ENCODE measurements at regions of chr22 and their contacts with region 1.

Region 1: DNA sequence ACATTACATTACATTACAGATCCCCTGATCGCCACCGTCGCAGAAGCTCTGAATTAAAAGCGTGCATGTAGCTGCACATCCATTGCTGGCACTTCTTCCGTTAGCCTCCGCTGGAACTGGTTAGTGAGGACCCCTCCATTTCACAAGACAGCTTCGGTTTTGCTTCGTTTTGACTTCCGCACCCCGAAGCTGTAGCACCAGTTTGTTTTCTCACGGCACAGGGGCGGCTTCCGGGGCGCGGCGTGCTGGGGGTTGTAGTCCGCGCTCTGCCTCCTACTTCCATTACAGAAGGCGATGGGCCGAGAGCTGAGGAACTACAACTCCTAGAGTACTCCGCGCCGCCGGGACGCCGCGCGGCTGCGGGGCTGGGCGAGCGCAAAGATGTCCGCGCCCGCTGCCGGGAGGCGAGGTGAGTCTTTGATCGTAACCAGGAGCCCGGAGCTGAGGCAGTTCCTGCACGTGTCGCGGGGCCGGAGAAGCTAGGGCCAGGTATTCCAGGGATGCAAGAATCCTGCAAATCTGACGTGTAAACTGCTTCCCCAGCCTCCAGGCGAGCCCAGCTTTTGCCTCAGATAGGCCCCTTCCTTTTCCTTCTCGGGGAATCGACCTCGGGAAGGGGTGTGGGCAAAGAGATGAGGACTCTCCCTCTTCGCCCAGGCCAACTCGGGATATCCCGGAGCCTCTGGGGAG is at the start of gene PEX26:
- H3K4me3 ChIP-seq: peak within 1 kb of the TSS; percentile 96
- H3K27ac ChIP-seq: peak within 1 kb of the TSS; percentile 67
- H3K4me1 ChIP-seq: no peaks in the 10 kb centered on the region
- CTCF ChIP-seq: no peak

Region 2: DNA sequence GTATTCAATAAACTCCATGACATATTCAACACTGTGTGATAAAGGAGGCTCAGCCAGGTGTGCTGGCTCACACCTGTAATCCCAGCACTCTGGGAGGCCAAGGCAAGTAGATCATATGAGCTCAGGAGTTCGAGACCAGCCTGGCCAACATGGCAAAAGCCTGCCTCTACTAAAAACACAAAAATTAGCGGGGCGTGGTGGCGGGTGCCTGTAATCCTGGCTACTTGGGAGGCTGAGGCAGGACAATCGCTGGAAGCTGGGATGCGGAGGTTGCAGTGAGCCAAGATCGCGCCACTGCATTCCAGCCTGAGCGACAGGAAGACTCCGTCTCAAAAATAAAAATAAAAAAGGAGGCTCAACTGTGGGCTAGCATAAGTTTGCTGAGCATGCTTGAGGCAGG is 518.6 kb before region 1 on chr22:
- CTCF ChIA-PET with region 1: interaction called, 10 read pairs
- POLR2A ChIA-PET with region 1: interaction called, 3 read pairs
- H3K4me3 ChIP-seq: no peak overlapping the region
- H3K27ac ChIP-seq: no peak overlapping the region
- H3K4me1 ChIP-seq: no peaks in the 10 kb centered on the region
- CTCF ChIP-seq: no peak

Region 3: DNA sequence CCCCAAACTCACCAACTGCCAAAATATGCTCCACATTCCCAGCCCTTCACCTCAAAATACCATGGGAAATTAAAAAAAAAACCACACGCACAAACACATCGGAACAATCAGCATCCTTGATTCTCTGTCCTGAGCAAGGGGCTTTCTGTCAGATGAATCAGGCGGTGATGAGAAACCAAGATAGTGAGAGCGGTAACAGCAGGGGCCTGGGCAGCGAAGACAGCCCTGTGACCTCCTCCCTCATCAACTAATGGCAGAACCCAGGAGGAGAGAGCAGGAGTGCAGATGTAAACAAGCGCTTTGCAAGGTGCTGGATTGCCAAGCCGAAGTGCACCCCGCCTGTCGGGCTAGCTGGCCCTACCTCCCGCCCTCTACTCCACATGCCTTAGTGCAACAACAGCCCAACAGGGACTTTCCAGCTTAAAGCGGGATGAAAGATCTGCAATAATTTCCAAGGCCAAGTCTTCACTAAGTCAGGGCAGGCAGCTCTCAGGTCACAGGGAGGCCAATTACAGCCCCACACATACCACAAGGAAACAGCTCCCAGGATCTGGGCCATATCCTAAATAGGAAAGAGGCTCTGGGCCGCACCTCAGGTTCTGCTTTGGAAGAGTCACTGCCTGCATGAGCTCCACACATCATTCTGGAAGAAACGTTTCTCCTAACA is 231.3 kb before region 1 on chr22:
- CTCF ChIA-PET with region 1: interaction called, 12 read pairs
- POLR2A ChIA-PET with region 1: no interaction called
- H3K4me3 ChIP-seq: no peak overlapping the region
- H3K27ac ChIP-seq: no peak overlapping the region
- H3K4me1 ChIP-seq: no peaks in the 10 kb centered on the region
- CTCF ChIP-seq: no peak

Region 4: DNA sequence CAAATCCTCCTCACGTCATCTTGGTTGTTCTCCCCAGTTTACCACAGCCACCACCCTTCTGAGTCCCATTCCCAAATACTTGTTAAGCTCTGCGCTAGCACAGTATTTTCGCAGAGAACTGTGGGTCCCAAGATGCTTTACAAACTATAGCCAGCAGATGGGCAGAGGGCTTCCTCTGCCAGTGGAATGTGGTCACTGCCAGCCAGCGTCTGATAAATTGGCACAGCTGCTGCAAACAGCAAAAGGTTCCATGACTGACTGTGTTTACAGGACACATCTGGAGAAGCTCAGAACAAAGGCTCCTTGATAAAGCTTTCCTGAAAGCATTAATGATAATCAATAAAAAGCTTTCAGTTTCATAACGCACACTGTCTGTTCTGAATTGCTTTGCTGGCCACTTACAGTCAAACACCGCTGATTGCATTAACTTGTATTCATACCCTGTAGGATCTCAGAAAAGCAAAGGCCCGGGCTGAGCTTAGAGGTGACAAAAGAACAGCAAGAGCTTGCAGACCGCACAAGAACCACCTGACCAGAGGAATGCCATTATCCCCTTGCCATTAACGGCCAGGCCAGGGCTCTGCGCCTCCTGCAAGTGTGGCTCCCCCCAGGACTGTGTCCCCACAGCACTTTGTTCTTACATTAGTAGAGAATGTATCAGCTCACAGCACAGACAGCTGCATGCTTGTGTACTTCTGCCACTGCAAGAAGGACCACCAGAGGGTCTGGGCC is 174.1 kb before region 1 on chr22:
- CTCF ChIA-PET with region 1: interaction called, 26 read pairs
- POLR2A ChIA-PET with region 1: no interaction called
- H3K4me3 ChIP-seq: no peak overlapping the region
- H3K27ac ChIP-seq: no peak overlapping the region
- H3K4me1 ChIP-seq: no peaks in the 10 kb centered on the region
- CTCF ChIP-seq: no peak

Region 5: GRCh38 chr22:18001040-18001893 is 76.5 kb before region 1 on chr22:
- CTCF ChIA-PET with region 1: interaction called, 20 read pairs
- POLR2A ChIA-PET with region 1: interaction called, 15 read pairs
- H3K4me3 ChIP-seq: peak overlapping the region; percentile 92
- H3K27ac ChIP-seq: peak overlapping the region; percentile 95
- H3K4me1 ChIP-seq: peaks cover 9% of the 10 kb centered on the region; the same call in 1 of the 2 replicates
- CTCF ChIP-seq: no peak; the same call in 1 of the 2 replicates

Region 6: GRCh38 chr22:18057568-18058209 is 20.1 kb before region 1 on chr22:
- CTCF ChIA-PET with region 1: interaction called, 95 read pairs
- POLR2A ChIA-PET with region 1: interaction called, 5 read pairs
- H3K4me3 ChIP-seq: no peak overlapping the region
- H3K27ac ChIP-seq: peak overlapping the region; percentile 79; the same call in 1 of the 2 replicates
- H3K4me1 ChIP-seq: peaks cover 24% of the 10 kb centered on the region
- CTCF ChIP-seq: no peak

Region 7: GRCh38 chr22:18108187-18108586 is 30.4 kb after region 1 on chr22:
- CTCF ChIA-PET with region 1: no interaction called
- POLR2A ChIA-PET with region 1: no interaction called
- H3K4me3 ChIP-seq: no peak overlapping the region
- H3K27ac ChIP-seq: no peak overlapping the region
- H3K4me1 ChIP-seq: no peaks in the 10 kb centered on the region
- CTCF ChIP-seq: no peak

Region 8: DNA sequence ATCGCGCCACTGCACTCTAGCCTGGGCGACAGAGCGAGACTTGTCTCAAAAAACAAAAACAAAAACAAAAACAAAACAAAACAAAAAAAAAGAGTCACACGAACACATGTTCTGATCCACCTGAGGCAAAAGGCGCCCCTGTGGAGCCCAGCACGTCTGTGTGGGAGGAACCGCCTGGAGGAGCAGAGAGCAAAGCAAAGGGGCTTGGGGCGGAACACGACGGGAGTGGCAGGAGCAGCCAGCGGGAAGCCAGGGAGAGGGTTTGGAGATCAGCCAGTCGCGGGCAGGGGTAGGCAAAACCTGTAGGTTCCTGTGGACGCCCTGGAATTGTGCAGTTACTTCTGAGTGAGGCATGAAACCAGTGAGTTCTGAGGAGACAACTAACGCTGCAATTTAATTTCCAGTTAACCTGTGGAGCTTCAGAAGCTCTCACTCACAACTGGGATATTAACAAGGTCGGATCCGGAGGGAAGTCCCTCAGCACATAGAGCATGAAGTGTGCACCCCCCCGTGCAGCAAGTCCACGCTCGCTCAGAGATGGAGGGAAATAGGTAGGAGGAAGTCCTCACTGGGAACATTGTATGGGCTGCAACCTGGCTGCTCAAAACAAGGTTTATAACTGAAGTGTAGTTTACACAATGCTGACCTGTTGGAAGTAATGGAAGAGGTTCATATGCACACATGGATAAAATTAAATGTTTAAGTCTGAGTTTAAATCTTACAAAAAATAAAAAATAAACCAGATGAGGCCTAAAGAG is 59.0 kb after region 1 on chr22:
- CTCF ChIA-PET with region 1: no interaction called
- POLR2A ChIA-PET with region 1: no interaction called
- H3K4me3 ChIP-seq: no peak overlapping the region
- H3K27ac ChIP-seq: no peak overlapping the region
- H3K4me1 ChIP-seq: no peaks in the 10 kb centered on the region
- CTCF ChIP-seq: no peak